PC-9 (cell line): ENCODE measurements at regions of chr19 and their contacts with region 1.

Region 1: DNA sequence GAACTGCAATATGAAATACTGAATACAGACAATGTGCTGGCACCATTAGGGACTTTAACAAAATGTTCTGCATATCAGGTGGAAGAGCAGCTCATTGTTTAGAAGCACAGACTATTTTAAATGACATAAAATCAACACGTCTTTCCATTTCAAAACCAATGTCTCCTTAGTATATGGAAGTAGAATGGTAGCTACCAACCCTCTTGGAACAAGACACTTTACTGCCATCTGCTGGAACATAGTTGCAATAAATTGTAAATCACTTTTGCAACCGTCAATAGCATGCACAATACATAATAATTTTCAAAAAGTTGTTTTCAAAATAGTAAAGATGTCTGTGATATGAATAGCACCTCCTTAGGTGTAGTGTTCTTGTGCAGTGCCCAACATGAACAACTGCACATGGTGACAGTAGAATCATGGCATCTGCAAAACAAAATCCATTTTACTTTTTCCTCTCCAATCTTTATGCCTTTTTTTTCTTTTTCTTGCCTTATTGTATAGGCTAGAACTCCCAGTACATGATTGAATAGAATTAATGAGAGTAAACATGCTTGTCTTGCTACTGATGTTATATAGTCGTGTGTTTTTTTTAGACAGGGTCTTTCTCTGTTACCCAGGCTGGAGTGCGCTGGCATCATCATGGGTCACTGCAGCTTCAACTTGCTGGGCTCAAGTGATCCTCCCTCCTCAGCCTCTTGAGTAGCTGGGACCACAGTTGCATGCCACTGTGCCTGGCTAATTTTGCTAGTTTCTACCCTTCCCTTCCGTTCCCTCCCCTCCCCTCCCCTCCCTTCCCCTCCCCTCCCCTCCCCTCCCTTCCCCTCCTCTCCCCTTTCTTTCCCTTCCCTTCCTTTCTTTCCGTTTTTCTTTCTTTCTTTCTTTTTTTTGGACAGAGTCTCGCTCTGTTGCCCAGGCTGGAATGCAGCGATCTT is 7.8 kb upstream of the LYPD5 start:
- DNase-seq: peak in 1 of 2 experiments; percentile 66
- H3K4me3 ChIP-seq: no peak overlapping the region
- H3K27ac ChIP-seq: no peak overlapping the region
- H3K4me1 ChIP-seq: peaks cover 7% of the 10 kb centered on the region
- H3K27me3 ChIP-seq: no peaks in the 10 kb centered on the region
- CTCF ChIP-seq: peak; percentile 77

Region 2: GRCh38 chr19:43619262-43620060 is 190.6 kb before region 1 on chr19 and contains the start of gene ZNF428:
- CTCF ChIA-PET with region 1: interaction called, 19 read pairs
- POLR2A ChIA-PET with region 1: no interaction called
- intact Hi-C with region 1: no loop called
- DNase-seq: peak; percentile 64 to 84
- H3K4me3 ChIP-seq: peak within 1 kb of the TSS; percentile 65
- H3K27ac ChIP-seq: peak within 1 kb of the TSS; percentile 54
- H3K4me1 ChIP-seq: peaks cover 9% of the 10 kb centered on the region
- H3K27me3 ChIP-seq: no peaks in the 10 kb centered on the region
- CTCF ChIP-seq: no peak
- total RNA-seq, gene ZNF428: 46.6 and 61.1 TPM in 2 replicates